HEK293T (cell line): ENCODE measurements at regions of chr9 and their contacts with region 1.

Region 1: DNA sequence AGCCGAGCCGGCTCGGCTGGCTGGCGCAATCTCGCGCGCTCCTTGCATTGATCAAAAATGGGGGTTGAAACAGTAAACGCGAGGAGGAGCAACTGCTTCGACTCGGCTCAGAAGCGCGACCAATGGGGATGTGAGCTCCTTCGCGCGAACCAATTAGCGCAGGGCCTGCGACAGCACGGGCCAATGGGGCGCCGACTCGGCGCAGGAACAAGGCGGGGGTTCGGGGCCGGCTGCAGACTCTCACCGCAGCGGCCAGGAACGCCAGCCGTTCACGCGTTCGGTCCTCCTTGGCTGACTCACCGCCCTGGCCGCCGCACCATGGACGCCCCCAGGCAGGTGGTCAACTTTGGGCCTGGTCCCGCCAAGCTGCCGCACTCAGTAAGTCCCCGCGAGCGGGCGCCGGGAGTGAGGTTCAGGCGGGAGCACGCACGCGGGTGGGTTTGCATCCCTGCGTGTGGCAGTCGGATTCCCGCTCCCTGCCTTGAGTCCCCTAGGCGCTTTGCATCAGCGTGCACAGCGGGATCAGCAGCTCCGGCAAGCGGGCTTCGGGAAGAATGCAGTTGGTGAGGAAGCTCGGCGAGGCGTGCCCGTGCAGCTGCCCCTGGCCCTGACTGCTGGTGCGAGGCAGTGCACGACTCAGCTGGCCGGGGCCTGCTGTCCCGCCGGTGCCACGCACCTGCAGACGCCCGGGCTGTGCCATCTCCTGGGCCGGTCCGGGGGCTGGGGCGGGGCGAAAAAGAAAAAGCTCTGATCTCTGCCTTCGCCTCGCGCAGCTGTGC is at the start of gene PSAT1:
- DNase-seq: peak; percentile 95

Region 2: DNA sequence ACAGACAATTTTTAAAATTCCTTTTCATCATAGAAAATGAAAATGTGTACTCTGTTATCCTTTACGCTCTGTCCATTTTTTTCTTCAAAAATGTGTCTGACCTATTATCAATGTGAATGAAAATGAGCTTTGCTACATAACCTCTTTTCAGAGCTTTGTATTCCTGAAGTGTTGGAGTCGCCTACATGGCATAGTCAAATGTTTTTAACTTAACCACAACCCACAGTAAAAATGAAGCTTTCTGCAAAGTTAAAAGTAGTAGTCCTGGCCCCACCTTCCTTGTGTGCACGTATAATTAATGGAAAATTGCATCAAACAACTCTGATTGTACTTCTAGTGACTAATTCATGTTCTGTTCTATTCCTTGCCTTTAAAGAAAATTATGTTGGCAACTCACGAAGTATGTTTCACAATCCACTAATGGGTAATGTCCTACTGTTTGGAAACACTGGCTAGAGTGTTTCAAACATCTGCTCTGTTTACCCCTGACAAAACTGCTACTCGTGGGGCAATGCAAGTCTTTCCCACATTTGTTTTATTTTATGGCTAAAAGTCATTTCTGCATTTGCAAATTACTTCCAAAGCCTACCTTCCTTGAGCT is 18.8 kb before region 1 on chr9:
- CTCF ChIA-PET with region 1: no interaction called
- POLR2A ChIA-PET with region 1: interaction called, 20 read pairs
- DNase-seq: no peak